ENCODE measurements at regions of chr17 and their contacts with region 1.

Region 1: DNA sequence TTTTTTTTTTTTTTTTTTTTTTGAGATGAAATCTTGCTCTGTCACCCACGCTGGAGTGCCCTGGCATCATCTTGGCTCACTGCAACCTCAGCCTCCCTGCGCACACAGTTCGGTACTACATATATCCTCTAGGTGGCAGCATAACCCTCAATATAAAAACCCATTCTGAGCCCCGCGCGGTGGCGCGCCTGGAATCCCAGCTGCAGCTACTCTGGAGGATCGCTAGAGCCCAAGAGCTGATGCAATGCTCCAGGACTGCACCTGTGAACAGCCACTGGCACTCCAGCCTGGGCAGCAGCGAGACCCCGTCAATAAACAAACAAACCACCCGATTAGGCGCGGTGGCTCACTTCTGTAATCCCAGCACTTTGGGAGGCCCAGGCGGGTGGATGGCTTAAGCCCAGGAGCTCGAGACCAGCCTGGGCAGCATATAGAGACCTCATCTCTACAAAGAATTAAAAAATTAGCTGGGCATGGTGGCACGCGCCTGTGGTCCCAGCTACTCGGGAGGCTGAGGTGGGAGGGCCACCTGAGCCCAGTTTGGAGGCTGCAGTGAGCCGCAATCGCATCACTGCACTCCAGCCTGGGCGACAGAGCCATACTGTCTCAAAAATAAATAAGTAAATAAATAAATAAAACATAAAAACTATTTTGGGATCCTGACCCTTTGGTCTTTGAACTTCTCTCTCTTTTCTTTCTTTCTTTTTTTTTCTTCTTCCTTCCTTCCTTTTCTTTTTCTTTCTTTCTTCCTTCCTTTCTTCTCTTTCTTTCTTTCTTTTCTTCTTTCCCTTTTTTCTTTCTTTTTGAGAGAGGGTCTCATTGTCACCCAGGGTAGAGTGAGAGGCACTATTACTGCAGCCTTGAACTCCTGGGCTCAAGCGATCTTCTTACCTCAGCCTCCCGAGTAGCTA is 15.4 kb upstream of the AKAP10 start:
- DNase-seq: peak; percentile 67
- CTCF ChIP-seq: peak; percentile 82

Region 2: GRCh38 chr17:20114466-20114865 is 121.4 kb after region 1 on chr17:
- in situ Hi-C with region 1: loop called (anchors 5 kb)
- DNase-seq: no peak
- CTCF ChIP-seq: no peak